Panc1 (cell line): ENCODE measurements at regions of chr19 and their contacts with region 1.

Region 1: GRCh38 chr19:57317503-57317902 is 2.8 kb upstream of the ZNF543 start:
- DNase-seq: no peak
- ATAC-seq: no peak
- H3K4me3 ChIP-seq: peak overlapping the region; percentile 19 to 28; a peak in 3 of 4 replicates
- H3K27ac ChIP-seq: no peak overlapping the region
- H3K4me1 ChIP-seq: peaks cover 11% of the 10 kb centered on the region
- H3K27me3 ChIP-seq: peaks cover 3% of the 10 kb centered on the region; the same call in 1 of the 2 replicates
- CTCF ChIP-seq: no peak

Region 2: GRCh38 chr19:57110592-57111328 is 206.7 kb before region 1 on chr19:
- CTCF ChIA-PET with region 1: no interaction called
- POLR2A ChIA-PET with region 1: interaction called, 18 read pairs
- in situ Hi-C with region 1: no loop called
- intact Hi-C with region 1: no loop called
- DNase-seq: no peak
- ATAC-seq: no peak
- H3K4me3 ChIP-seq: no peak overlapping the region
- H3K27ac ChIP-seq: no peak overlapping the region
- H3K4me1 ChIP-seq: no peaks in the 10 kb centered on the region
- H3K27me3 ChIP-seq: no peaks in the 10 kb centered on the region
- CTCF ChIP-seq: no peak